ENCODE measurements at regions of chr17 and their contacts with region 1.

Region 1: GRCh38 chr17:39636927-39637736 is at the start of gene STARD3:
- DNase-seq: no peak
- ATAC-seq: peak; percentile 97
- H3K4me3 ChIP-seq: peak within 1 kb of the TSS; percentile 100
- H3K27ac ChIP-seq: peak within 1 kb of the TSS; percentile 90
- H3K4me1 ChIP-seq: peaks cover 20% of the 10 kb centered on the region
- H3K27me3 ChIP-seq: no peaks in the 10 kb centered on the region
- CTCF ChIP-seq: peak in 1 of 3 experiments; percentile 12; a peak in 2 of 6 replicates
- EP300 ChIP-seq: no peak
- POLR2A ChIP-seq: peak; percentile 91
- RAD21 ChIP-seq: no peak
- polyA plus RNA-seq, gene STARD3: 0.08 to 1.4 TPM

Region 2: DNA sequence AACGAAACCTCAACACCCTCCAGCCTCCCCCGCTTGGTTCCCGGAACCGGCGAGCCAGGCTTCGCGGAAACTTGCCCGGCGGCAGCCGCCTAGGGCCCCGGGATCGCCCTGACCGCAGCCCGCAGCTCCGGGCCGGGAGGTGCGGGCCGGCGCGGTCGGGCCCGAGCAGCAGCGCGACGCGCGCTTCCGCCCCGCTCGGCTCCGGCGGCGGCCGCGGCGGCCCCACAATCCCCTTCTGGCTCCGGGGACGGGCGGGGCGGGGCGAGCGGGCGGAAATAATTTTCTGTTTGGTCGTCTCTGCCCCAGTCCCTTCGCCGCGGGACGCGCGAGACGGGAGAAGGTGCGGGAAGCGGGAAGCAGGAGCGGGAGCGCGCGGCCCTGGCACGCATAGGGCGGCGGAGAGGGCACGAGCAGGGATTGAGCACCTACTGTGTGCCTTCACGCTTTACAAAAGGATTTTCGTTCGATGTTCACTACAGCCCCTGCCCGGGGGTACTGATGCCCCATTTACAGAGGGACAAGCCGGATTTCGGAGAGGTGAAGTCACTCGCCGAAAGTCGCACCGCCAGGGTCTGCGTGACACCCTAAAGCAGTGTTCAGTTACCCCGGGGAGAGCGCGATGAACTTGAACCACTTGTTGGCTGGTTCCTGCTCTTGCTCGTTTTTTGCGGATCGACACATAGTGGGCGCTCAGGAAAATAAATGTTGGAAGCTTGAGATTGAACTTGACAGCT is 934.8 kb before region 1 on chr17:
- CTCF ChIA-PET with region 1: no interaction called
- POLR2A ChIA-PET with region 1: no interaction called
- RAD21 ChIA-PET with region 1: no interaction called
- SMC1A ChIA-PET with region 1: no interaction called
- in situ Hi-C with region 1: no loop called
- intact Hi-C with region 1: no loop called
- DNase-seq: no peak
- ATAC-seq: peak; percentile 38
- H3K4me3 ChIP-seq: peak overlapping the region; percentile 91
- H3K27ac ChIP-seq: peak overlapping the region; percentile 100
- H3K4me1 ChIP-seq: peaks cover 27% of the 10 kb centered on the region
- H3K27me3 ChIP-seq: no peaks in the 10 kb centered on the region
- CTCF ChIP-seq: no peak
- EP300 ChIP-seq: peak; percentile 8 to 56; a peak in 1 of 4 replicates
- POLR2A ChIP-seq: peak; percentile 90
- RAD21 ChIP-seq: no peak

Region 3: DNA sequence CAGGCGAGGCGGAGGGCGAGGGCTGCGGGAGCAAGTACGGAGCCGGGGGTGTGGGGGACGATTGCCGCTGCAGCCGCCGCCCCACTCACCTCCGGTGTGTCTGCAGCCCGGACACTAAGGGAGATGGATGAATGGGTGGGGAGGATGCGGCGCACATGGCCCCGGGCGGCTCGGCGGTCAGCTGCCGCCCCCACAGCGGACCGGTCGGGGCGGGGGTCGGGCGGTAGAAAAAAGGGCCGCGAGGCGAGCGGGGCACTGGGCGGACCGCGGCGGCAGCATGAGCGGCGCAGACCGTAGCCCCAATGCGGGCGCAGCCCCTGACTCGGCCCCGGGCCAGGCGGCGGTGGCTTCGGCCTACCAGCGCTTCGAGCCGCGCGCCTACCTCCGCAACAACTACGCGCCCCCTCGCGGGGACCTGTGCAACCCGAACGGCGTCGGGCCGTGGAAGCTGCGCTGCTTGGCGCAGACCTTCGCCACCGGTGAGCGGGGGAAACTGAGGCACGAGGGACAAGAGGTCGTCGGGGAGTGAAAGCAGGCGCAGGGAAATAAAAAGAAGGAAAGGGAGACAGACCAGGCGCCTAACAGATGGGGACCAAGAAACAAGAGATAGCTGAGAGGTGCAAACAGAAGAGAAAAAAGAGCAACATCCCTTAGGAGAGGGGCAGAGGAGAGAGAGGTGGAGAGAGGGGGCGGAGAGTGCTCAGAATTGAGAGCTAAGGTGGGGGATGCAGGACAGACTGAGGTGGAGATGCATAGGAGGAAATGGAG is 31.3 kb after region 1 on chr17 and contains the start of gene PNMT:
- CTCF ChIA-PET with region 1: interaction called, 23 read pairs
- POLR2A ChIA-PET with region 1: no interaction called
- RAD21 ChIA-PET with region 1: interaction called, 3 read pairs
- SMC1A ChIA-PET with region 1: interaction called, 3 read pairs
- in situ Hi-C with region 1: no loop called
- intact Hi-C with region 1: no loop called
- DNase-seq: no peak
- ATAC-seq: peak; percentile 82
- H3K4me3 ChIP-seq: peak within 1 kb of the TSS; percentile 44; the same call in 1 of the 2 replicates
- H3K27ac ChIP-seq: no peak within 1 kb of the TSS
- H3K4me1 ChIP-seq: no peaks in the 10 kb centered on the region
- H3K27me3 ChIP-seq: peaks cover 4 to 6% of the 10 kb centered on the region in 2 experiments; a peak in 3 of 4 replicates
- CTCF ChIP-seq: peak; percentile 57 to 73 (median 62)
- EP300 ChIP-seq: no peak
- POLR2A ChIP-seq: no peak
- RAD21 ChIP-seq: 0 out of 2 replicates have a peak, but pooled peaks have one; percentile 17
- polyA plus RNA-seq, gene PNMT: not detected